PC-3 (cell line): ENCODE measurements at regions of chr7 and their contacts with region 1.

Region 1: DNA sequence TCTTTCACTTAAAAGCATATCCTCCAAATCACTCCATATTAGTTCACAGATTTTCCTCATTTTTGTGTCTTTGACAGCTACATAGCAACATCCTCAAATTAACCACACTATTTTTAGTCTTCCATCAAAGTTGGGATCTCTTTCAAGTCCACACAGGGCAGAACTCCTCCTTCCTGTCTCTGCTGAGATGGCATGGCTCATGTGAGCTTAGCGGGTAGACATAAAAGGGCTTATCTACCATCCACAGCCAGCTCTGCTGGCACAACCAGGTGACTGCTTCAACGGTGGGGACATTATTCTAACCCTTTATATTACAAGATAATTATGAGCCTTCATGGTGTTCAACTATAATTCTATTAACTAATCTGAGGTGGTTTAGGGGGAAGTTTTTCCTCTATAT is 35.5 kb downstream of the ICA1 start:
- DNase-seq: no peak
- ATAC-seq: no peak
- H3K4me3 ChIP-seq: no peak overlapping the region
- H3K27ac ChIP-seq: no peak overlapping the region
- H3K4me1 ChIP-seq: no peaks in the 10 kb centered on the region
- H3K27me3 ChIP-seq: no peaks in the 10 kb centered on the region
- CTCF ChIP-seq: no peak

Region 2: GRCh38 chr7:7577888-7578287 is 648.6 kb before region 1 on chr7:
- CTCF ChIA-PET with region 1: no interaction called
- POLR2A ChIA-PET with region 1: no interaction called
- intact Hi-C with region 1: no loop called
- DNase-seq: no peak
- ATAC-seq: no peak
- H3K4me3 ChIP-seq: no peak overlapping the region
- H3K27ac ChIP-seq: no peak overlapping the region
- H3K4me1 ChIP-seq: no peaks in the 10 kb centered on the region
- H3K27me3 ChIP-seq: no peaks in the 10 kb centered on the region
- CTCF ChIP-seq: no peak

Region 3: GRCh38 chr7:8068892-8069686 is 157.4 kb before region 1 on chr7:
- CTCF ChIA-PET with region 1: no interaction called
- POLR2A ChIA-PET with region 1: no interaction called
- intact Hi-C with region 1: no loop called
- DNase-seq: no peak
- ATAC-seq: no peak
- H3K4me3 ChIP-seq: no peak overlapping the region
- H3K27ac ChIP-seq: no peak overlapping the region
- H3K4me1 ChIP-seq: no peaks in the 10 kb centered on the region
- H3K27me3 ChIP-seq: no peaks in the 10 kb centered on the region
- CTCF ChIP-seq: no peak

Region 4: GRCh38 chr7:8178353-8178752 is 48.1 kb before region 1 on chr7:
- CTCF ChIA-PET with region 1: no interaction called
- POLR2A ChIA-PET with region 1: no interaction called
- intact Hi-C with region 1: loop called (anchors 2 kb)
- DNase-seq: no peak
- ATAC-seq: peak; percentile 45; the same call in 1 of the 2 replicates
- H3K4me3 ChIP-seq: no peak overlapping the region
- H3K27ac ChIP-seq: no peak overlapping the region
- H3K4me1 ChIP-seq: no peaks in the 10 kb centered on the region
- H3K27me3 ChIP-seq: 0 out of 2 replicates have a peak, but pooled peaks cover 3% of the 10 kb centered on the region
- CTCF ChIP-seq: no peak